Dorsolateral prefrontal cortex (tissue), 120 donors: ENCODE measurements at regions of chr1 and their contacts with region 1.

Region 1: DNA sequence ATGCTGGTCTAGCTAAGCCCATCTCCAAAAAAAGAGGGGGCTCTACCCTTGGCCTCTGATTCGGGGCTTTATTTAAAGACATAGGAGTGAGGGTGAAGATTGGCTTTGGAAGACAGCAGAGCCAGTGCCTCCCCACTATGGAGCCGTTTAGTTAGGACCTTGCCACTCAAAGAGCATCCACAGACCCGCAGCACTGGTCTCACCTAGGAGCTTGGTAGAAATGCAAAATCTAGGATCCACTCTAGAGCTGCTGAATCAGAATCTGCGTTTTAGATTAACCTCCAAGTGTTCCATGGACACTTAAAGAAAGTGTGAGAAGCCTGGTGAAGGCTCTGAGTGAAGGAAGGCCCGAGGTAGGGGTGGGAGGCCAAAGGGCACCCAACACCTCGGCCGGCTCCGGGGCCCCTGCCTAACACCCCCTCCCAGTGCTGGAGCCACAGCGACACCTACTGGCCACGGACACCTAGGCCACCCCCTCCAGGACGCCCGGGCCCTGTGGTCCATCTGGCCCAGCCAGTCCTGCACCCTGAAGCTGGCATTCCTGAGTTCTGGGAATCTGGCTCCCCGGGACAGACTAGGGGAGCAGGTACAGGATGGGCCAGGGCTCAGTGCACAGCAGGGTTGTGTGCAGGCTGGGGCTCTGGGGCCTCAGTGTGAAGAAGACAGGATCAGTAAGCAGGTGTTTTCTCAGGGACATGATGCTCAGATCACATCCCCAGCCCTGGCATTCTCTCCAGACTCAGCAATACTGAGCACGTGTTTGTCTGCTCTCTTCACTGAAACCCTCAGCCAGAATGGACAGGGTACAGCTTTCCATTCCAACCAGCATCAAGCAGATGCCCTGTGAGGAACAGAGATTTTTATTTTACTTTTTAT is 79.2 kb downstream of the TMEM53 start:
- DNase-seq: peak; percentile 65 to 88 (median 79)
- H3K4me3 ChIP-seq: no peak overlapping the region
- H3K27ac ChIP-seq: peak overlapping the region; percentile 61 to 100 (median 97)
- H3K27me3 ChIP-seq: peaks cover 0 to 2% (median 0%) of the 10 kb centered on the region in 45 donors
- CTCF ChIP-seq: peak; percentile 81 to 99 (median 96)

Region 2: GRCh38 chr1:44213222-44214112 is 381.6 kb before region 1 on chr1 and contains the start of gene DMAP1:
- intact Hi-C with region 1: loop called in 1 of 2 experiments (anchors 10 kb)
- DNase-seq: peak; percentile 82 to 94 (median 89)
- H3K4me3 ChIP-seq: peak within 1 kb of the TSS; percentile 56 to 98 (median 91)
- H3K27ac ChIP-seq: peak within 1 kb of the TSS; percentile 28 to 95 (median 88)
- H3K27me3 ChIP-seq: no peaks in the 10 kb centered on the region
- CTCF ChIP-seq: peak in 48 of 56 donors; percentile 9 to 66 (median 41)
- total RNA-seq, gene DMAP1: 46.6 to 81.3 (median 59.7) TPM

Region 3: GRCh38 chr1:44405041-44405797 is 189.9 kb before region 1 on chr1 and contains the start of gene RNF220:
- intact Hi-C with region 1: loop called (anchors 1 kb)
- DNase-seq: peak; percentile 41 to 97 (median 92)
- H3K4me3 ChIP-seq: peak within 1 kb of the TSS; percentile 35 to 86 (median 69)
- H3K27ac ChIP-seq: peak within 1 kb of the TSS; percentile 63 to 97 (median 92)
- H3K27me3 ChIP-seq: peaks cover 0 to 63% (median 40%) of the 10 kb centered on the region in 45 donors
- CTCF ChIP-seq: peak in 48 of 56 donors; percentile 0 to 55 (median 36)
- total RNA-seq, gene RNF220: 104 to 415 (median 196) TPM

Region 4: GRCh38 chr1:44507490-44508396 is 87.4 kb before region 1 on chr1:
- intact Hi-C with region 1: loop called (anchors 2 kb)
- DNase-seq: peak; percentile 22 to 94 (median 86)
- H3K4me3 ChIP-seq: peak overlapping the region in 10 of 59 donors; percentile 1 to 25 (median 12)
- H3K27ac ChIP-seq: peak overlapping the region in 58 of 59 donors; percentile 71 to 100 (median 94)
- H3K27me3 ChIP-seq: peaks cover 0 to 18% (median 0%) of the 10 kb centered on the region in 45 donors
- CTCF ChIP-seq: peak in 8 of 56 donors; percentile 12 to 33 (median 16)

Region 5: DNA sequence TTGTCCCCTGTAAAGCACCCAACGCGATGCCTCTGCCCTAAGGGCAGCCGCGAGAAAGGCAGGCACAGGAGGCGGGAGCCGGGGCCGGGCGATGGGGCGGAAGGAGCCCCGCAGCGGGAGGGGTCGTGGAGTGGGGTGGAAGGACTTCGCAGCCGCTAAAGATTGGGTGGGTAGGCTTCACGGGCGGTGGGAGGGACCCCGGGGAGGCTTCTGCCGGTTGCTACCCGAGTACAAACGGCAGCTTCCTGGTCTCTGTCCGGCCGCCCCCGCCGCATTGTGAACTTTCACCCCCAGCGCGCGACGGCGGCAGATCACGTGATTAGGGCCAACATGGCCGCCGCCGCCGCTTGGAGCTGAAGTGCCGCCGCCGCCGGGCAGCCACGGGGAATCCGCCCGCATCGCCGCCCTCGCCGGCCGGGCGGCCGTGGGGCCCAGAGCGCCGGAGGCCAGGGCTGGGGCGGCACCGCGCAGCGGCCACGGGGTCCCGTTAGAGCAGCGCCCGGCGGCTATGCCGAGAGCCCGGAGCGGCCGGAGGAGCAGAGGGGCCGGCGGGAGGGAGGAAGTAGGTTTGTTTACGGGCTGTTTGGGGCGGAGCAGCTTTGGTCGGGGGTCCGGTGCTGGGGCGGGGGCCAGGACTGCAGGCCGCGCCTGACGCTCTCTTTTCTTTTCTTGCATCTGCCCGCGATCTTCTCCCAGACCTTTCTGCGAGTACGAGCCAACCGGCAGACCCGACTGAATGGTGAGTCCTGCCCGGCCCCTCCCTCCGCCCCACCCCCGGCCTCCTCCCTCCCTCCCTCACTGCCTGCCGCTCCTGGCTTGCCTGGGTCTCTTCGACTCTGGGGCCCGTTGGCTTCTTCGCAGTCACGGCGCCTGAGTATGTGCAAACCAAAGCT is 36.8 kb after region 1 on chr1:
- intact Hi-C with region 1: loop called in 1 of 2 experiments (anchors 5 kb)
- DNase-seq: peak; percentile 71 to 88 (median 86)
- H3K4me3 ChIP-seq: peak overlapping the region; percentile 44 to 79 (median 67)
- H3K27ac ChIP-seq: peak overlapping the region; percentile 68 to 98 (median 91)
- H3K27me3 ChIP-seq: no peaks in the 10 kb centered on the region
- CTCF ChIP-seq: peak in 8 of 56 donors; percentile 1 to 34 (median 18)